ENCODE measurements at regions of chr1 and their contacts with region 1.

Region 1: DNA sequence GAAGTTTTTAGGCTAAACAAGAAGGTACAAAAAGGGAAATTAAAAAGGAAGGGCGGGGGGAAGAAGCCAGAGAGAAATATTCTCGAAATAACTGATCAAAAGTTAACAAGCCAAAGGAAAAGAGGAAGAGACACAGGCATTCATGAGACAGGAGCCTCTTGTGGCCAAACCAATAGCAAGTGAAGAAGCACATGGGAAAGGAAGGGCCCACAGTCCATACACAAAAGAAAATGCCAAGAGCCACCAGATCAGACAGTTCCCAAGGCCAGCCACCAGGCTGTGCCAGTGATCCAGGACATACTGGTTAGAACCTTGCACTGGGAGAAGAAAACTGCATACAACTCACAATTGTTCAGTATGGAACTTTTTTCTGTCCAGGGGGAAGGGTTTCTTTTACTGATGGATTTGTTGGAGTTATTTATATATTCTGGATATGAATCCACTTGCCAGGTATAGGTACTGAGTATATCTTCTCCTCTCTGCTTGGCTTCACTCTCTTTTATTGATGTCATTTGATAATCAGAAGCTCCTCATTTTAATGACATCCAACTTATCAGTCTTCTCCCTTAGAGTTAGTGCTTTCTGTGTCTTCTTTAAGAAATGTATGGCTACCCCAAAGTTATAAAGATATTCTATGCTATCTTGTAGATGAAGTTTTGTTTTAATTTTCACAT is 76.8 kb downstream of the CD46 start:
- DNase-seq: peak; percentile 79
- H3K4me3 Mint-ChIP-seq: no peak overlapping the region
- H3K27ac Mint-ChIP-seq: peak overlapping the region; percentile 11
- H3K4me1 Mint-ChIP-seq: peaks cover 97% of the 10 kb centered on the region
- H3K27me3 Mint-ChIP-seq: peaks cover 2% of the 10 kb centered on the region

Region 2: GRCh38 chr1:206556750-206557635 is 1271.6 kb before region 1 on chr1:
- CTCF ChIA-PET with region 1: no interaction called
- POLR2A ChIA-PET with region 1: no interaction called
- intact Hi-C with region 1: loop called (anchors 10 kb)
- DNase-seq: peak; percentile 94
- H3K4me3 Mint-ChIP-seq: peak overlapping the region; percentile 97
- H3K27ac Mint-ChIP-seq: peak overlapping the region; percentile 99
- H3K4me1 Mint-ChIP-seq: peaks cover 66% of the 10 kb centered on the region
- H3K27me3 Mint-ChIP-seq: no peaks in the 10 kb centered on the region

Region 3: GRCh38 chr1:207321079-207321789 is 507.4 kb before region 1 on chr1 and contains the start of gene CD55:
- CTCF ChIA-PET with region 1: no interaction called
- POLR2A ChIA-PET with region 1: no interaction called
- intact Hi-C with region 1: loop called (anchors 2 kb)
- DNase-seq: peak; percentile 99
- H3K4me3 Mint-ChIP-seq: peak within 1 kb of the TSS; percentile 92
- H3K27ac Mint-ChIP-seq: peak within 1 kb of the TSS; percentile 96
- H3K4me1 Mint-ChIP-seq: peaks cover 33% of the 10 kb centered on the region
- H3K27me3 Mint-ChIP-seq: no peaks in the 10 kb centered on the region
- total RNA-seq, gene CD55: 40.4 to 42.3 TPM

Region 4: DNA sequence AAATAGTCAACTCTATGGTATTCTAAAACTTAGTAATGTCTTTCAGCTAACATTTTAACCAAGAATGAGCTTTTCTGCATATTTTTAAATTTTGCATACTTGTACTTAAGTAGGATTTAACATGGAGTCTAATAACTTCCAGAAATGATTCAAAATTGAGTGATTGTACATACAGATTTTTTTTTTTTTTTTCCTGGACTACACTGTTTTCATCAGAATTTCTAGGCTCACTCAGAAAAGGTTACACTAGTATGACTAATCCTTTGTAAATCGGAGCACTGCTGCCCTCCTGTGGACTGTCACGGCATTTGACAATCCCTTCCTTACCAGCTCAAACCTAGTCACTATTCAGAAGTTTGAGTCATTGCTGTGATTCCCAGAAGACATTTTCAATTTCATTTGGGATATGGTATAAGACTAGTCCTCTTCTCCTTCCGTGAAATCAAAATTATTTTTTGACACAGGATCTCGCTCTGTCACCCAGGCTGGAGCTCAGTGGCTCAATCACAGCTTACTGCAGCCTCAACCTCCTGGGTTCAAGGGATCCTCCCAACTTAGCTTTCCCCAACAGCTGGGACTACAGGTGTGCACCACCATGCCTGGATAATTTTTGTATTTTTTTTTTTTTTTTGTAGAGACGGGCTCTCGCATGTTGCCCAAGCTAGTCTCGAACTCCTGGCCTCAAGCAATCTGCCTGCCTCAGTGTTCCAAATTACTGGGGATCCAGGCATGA is 31.2 kb before region 1 on chr1:
- CTCF ChIA-PET with region 1: interaction called, 39 read pairs
- POLR2A ChIA-PET with region 1: no interaction called
- intact Hi-C with region 1: no loop called
- DNase-seq: peak; percentile 90
- H3K4me3 Mint-ChIP-seq: no peak overlapping the region
- H3K27ac Mint-ChIP-seq: peak overlapping the region; percentile 64
- H3K4me1 Mint-ChIP-seq: peaks cover 36% of the 10 kb centered on the region
- H3K27me3 Mint-ChIP-seq: no peaks in the 10 kb centered on the region

Region 5: GRCh38 chr1:207848234-207848633 is 19.6 kb after region 1 on chr1:
- CTCF ChIA-PET with region 1: interaction called, 11 read pairs
- POLR2A ChIA-PET with region 1: interaction called, 4 read pairs
- intact Hi-C with region 1: loop called (anchors 1 kb)
- DNase-seq: peak; percentile 86
- H3K4me3 Mint-ChIP-seq: peak overlapping the region; percentile 1
- H3K27ac Mint-ChIP-seq: peak overlapping the region; percentile 75
- H3K4me1 Mint-ChIP-seq: peaks cover 67% of the 10 kb centered on the region
- H3K27me3 Mint-ChIP-seq: no peaks in the 10 kb centered on the region

Region 6: GRCh38 chr1:207868774-207869721 is 40.4 kb after region 1 on chr1:
- CTCF ChIA-PET with region 1: interaction called, 460 read pairs
- POLR2A ChIA-PET with region 1: interaction called, 24 read pairs
- intact Hi-C with region 1: loop called (anchors 1 kb)
- DNase-seq: peak; percentile 81
- H3K4me3 Mint-ChIP-seq: peak overlapping the region; percentile 90
- H3K27ac Mint-ChIP-seq: peak overlapping the region; percentile 89
- H3K4me1 Mint-ChIP-seq: peaks cover 82% of the 10 kb centered on the region
- H3K27me3 Mint-ChIP-seq: no peaks in the 10 kb centered on the region

Region 7: GRCh38 chr1:207997486-207998268 is 169.1 kb after region 1 on chr1:
- CTCF ChIA-PET with region 1: interaction called, 19 read pairs
- POLR2A ChIA-PET with region 1: no interaction called
- intact Hi-C with region 1: no loop called
- DNase-seq: peak; percentile 62
- H3K4me3 Mint-ChIP-seq: no peak overlapping the region
- H3K27ac Mint-ChIP-seq: no peak overlapping the region
- H3K4me1 Mint-ChIP-seq: no peaks in the 10 kb centered on the region
- H3K27me3 Mint-ChIP-seq: peaks cover 8% of the 10 kb centered on the region

Measured in activated CD4-positive, alpha-beta memory T cell treated with anti-CD3 and anti-CD28 coated beads for 36 hours (primary cell).